ENCODE measurements at regions of chr16 and their contacts with region 1.

Region 1: DNA sequence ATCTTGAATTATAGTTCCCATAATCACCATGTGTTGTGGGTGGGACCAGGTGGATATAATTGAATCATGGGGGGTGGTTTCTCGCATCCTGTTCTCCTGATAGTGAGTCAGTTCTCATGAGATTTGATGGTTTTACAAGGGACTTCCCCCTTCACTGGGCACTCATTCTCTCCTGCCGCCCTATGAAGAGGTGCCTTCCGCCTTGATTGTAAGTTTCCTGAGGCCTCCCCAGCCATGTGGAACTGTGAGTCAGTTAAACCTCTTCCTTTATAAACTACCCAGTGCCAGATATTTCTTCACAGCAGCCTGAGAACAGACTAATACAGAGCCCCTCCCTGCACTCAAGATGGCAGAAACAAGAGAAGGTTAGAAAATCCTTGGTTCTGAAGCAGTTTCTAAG is 26.4 kb downstream of the LDAF1 start:
- DNase-seq: peak; percentile 61
- ATAC-seq: peak; percentile 84
- H3K4me3 Mint-ChIP-seq: no peak overlapping the region
- H3K27ac Mint-ChIP-seq: peak overlapping the region; percentile 25
- H3K4me1 Mint-ChIP-seq: peaks cover 15% of the 10 kb centered on the region
- H3K27me3 Mint-ChIP-seq: peaks cover 2% of the 10 kb centered on the region
- CTCF ChIP-seq: no peak

Region 2: DNA sequence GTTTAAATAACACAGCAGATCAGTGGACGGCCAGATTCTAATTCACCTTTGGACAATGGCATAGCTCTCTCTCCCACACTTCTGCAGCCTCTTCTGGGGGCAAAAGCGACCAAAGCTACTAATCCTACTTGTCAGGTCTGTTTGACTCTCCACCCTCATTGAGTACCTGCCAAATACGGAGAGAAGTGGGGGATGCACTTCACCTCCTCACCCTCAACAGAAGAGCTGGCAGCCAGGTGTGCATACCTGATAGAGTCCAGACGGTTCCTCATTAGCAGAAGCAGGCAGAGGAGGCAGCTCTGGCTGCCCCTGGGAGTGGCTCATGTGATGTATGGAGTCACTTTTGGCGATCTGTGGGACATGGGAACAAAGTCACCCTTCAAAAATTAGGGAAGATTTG is 39.1 kb before region 1 on chr16:
- CTCF ChIA-PET with region 1: no interaction called
- POLR2A ChIA-PET with region 1: no interaction called
- intact Hi-C with region 1: no loop called
- DNase-seq: no peak
- ATAC-seq: no peak
- H3K4me3 Mint-ChIP-seq: no peak overlapping the region
- H3K27ac Mint-ChIP-seq: no peak overlapping the region
- H3K4me1 Mint-ChIP-seq: no peaks in the 10 kb centered on the region
- H3K27me3 Mint-ChIP-seq: peaks cover 23% of the 10 kb centered on the region
- CTCF ChIP-seq: no peak

Region 3: DNA sequence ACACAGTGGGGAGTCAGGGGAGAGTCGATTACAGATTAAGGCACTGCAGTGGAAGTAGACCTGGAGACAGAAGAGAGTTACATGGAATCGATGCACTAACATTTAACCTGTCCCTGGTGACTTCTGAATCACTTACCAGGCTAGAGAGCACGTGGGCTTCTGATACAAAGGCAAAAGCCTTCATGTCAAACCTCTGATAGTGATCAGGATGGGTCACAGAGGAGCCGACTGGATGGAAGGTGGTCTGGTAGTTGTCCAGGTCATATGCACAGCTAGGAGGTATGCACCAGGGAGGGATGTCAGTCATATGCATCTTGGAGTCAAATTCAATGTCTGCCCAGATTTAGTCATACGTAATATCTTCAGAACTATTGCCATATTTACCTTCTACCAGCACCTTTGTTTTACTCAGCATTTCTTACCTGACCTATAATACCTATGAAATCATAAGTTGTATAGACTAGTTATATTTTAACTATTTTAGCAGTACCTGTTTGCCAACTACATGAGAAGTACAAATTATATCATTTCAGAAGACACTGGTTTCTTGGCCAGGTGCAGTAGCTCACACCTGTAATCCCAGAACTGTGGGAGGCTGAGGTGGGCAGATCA is 14.9 kb after region 1 on chr16:
- CTCF ChIA-PET with region 1: interaction called, 11 read pairs
- POLR2A ChIA-PET with region 1: no interaction called
- intact Hi-C with region 1: no loop called
- DNase-seq: no peak
- ATAC-seq: no peak
- H3K4me3 Mint-ChIP-seq: no peak overlapping the region
- H3K27ac Mint-ChIP-seq: no peak overlapping the region
- H3K4me1 Mint-ChIP-seq: peaks cover 4% of the 10 kb centered on the region
- H3K27me3 Mint-ChIP-seq: peaks cover 32% of the 10 kb centered on the region
- CTCF ChIP-seq: no peak

Region 4: DNA sequence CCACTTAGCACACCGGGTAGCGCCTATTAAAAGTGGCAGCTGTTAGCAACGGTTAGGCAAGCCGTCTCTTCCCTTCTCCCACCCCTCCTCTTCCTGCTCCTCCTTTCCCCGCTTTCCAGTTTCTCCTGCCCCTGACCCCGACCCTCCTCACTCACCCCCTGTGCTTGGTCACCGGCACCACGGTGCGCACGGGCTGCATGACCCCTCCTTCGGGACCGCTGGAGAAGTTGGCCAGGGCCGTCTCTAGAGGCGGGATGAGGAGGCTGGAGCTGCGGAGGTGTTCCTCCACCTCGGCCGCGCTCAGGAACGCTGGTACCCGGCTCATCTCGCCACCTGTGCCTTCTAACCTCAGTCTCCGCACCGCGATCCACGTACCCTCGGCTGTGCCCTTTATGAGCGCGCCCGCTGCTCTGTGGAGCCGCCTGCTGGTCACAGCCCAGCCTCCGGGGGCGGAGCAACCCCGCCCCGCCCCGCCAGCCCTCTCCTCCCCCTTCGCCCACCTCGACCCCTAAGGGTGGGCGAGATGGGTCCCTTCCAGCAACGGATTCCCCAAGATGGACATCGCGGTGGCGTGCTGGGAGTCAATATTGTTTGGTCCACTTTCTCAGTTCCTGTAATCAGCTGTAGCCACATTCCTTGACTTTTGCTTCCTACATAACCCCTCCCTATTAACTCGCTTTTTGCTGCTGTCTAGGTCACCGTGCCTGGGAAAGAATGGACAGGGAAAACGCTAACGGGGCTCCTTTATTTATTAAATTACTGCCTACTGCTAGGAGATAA is 93.3 kb after region 1 on chr16 and contains the start of gene CRYM:
- CTCF ChIA-PET with region 1: interaction called, 11 read pairs
- POLR2A ChIA-PET with region 1: no interaction called
- intact Hi-C with region 1: no loop called
- DNase-seq: peak; percentile 69
- ATAC-seq: peak; percentile 97
- H3K4me3 Mint-ChIP-seq: peak within 1 kb of the TSS; percentile 12
- H3K27ac Mint-ChIP-seq: no peak within 1 kb of the TSS
- H3K4me1 Mint-ChIP-seq: no peaks in the 10 kb centered on the region
- H3K27me3 Mint-ChIP-seq: peaks cover 58% of the 10 kb centered on the region
- CTCF ChIP-seq: peak; percentile 84
- total RNA-seq, gene CRYM: not detected

Region 5: GRCh38 chr16:21300309-21301167 is 115.7 kb after region 1 on chr16:
- CTCF ChIA-PET with region 1: interaction called, 8 read pairs
- POLR2A ChIA-PET with region 1: no interaction called
- intact Hi-C with region 1: loop called (anchors 10 kb)
- DNase-seq: peak; percentile 73
- ATAC-seq: peak; percentile 76
- H3K4me3 Mint-ChIP-seq: peak overlapping the region; percentile 79
- H3K27ac Mint-ChIP-seq: no peak overlapping the region
- H3K4me1 Mint-ChIP-seq: peaks cover 14% of the 10 kb centered on the region
- H3K27me3 Mint-ChIP-seq: peaks cover 44% of the 10 kb centered on the region
- CTCF ChIP-seq: no peak

Region 6: GRCh38 chr16:21565861-21566669 is 381.2 kb after region 1 on chr16:
- CTCF ChIA-PET with region 1: interaction called, 3 read pairs
- POLR2A ChIA-PET with region 1: no interaction called
- intact Hi-C with region 1: loop called (anchors 10 kb)
- DNase-seq: no peak
- ATAC-seq: no peak
- H3K4me3 Mint-ChIP-seq: no peak overlapping the region
- H3K27ac Mint-ChIP-seq: no peak overlapping the region
- H3K4me1 Mint-ChIP-seq: peaks cover 3% of the 10 kb centered on the region
- H3K27me3 Mint-ChIP-seq: peaks cover 2% of the 10 kb centered on the region
- CTCF ChIP-seq: no peak

Measured in activated CD8-positive, alpha-beta T cell treated with anti-CD3 and anti-CD28 coated beads for 36 hours (primary cell).